ENCODE measurements at regions of chr1 and their contacts with region 1.

Region 1: DNA sequence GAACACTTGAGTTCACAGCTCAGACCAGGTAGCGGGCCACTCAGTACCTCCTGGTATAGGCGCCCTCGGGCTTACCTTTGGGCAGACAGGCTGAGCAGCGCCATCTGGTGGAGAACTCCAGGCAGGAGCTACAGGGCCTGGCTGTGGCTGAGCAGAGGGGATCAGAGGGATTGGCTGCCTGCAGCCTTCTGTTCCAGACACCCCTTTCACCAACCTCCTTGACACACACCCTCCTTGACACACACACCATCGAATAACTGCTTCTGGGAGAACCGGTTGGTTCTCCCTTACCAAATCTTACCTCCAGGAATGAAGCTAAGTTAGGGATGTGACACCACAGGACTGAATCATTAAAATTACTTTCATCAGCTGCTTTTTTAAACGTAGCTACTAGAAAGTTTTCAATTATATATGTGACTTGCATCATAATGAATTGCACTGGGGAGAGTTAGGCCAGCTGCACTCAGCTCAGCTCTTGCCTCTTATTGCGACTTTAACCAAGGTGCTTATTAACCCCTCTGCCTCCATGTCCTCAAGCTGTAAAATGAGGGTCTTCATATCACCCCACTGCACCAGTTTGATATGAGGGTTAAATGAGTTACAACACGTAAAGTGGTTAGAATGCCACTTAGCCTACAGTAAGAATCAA is 6.6 kb downstream of the LIN28A start:
- DNase-seq: peak; percentile 70 to 71
- ATAC-seq: peak; percentile 96 to 99
- H3K4me3 ChIP-seq: no peak overlapping the region
- H3K27ac ChIP-seq: no peak overlapping the region
- H3K4me1 ChIP-seq: peaks cover 5% of the 10 kb centered on the region; the same call in 1 of the 3 replicates
- CTCF ChIP-seq: peak; percentile 75
- EP300 ChIP-seq: no peak
- POLR2A ChIP-seq: no peak
- RAD21 ChIP-seq: peak; percentile 64 to 74

Region 2: DNA sequence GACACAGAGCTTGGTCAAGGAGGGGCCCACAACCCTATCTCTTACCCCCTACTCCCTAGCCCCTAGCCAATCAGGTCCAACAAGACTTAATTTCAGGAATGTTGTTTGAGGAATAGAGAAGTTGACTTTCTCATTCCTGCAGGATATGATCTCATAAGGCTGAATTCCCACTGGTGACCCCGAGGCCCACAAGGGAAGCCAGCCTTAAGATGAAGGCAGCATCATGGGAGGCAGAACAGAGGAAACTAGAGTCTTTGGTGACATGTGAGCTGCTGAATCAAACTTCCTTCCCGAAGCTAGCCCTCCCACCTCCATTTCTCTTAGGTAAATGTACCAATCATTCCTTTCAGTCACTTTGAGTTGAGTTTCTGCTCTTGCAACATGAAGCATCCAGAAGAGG is 314.7 kb before region 1 on chr1:
- CTCF ChIA-PET with region 1: interaction called, 11 read pairs
- POLR2A ChIA-PET with region 1: no interaction called
- DNase-seq: no peak
- ATAC-seq: no peak
- H3K4me3 ChIP-seq: no peak overlapping the region
- H3K27ac ChIP-seq: no peak overlapping the region
- H3K4me1 ChIP-seq: peaks cover 7% of the 10 kb centered on the region; the same call in 2 of the 3 replicates
- CTCF ChIP-seq: no peak
- EP300 ChIP-seq: no peak
- POLR2A ChIP-seq: no peak
- RAD21 ChIP-seq: no peak

Region 3: DNA sequence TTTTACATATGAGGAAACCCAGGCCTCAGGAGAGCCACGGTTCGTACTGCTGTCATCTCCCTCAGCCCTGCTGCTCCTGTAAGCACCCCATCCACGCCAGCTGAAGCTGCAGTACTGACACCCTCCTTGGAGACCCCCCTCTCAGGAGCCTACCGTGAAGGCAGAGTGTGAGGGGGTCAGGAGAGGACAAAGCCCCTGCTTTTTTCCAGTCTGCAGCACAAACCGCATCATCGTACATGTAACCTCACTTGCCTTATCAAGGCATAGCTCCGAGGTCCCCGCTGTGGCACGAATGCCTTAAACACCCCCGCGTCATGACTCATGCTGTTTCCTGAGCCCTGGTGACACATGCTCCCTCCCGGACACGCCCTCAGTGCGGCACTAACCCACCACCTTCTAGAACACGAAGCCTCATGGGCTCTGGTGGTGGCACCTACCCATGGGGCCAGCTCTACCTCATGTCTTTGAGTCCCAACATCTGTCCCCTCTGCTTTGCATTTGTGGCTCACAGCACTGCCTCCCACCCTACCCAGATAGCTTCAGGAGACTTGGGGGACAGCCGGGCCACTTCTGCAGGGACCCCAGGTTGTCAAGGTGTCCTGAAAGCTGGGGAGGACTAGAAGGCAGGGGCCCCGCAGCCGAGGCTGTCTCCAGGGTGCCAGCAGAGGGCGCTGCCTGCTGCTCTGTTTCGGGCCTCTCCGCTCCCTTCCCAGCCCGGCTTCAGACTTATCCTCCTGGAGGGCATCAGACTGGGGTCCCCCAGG is 132.5 kb before region 1 on chr1:
- CTCF ChIA-PET with region 1: interaction called, 46 read pairs
- POLR2A ChIA-PET with region 1: no interaction called
- DNase-seq: peak; percentile 64
- ATAC-seq: peak; percentile 67 to 82
- H3K4me3 ChIP-seq: no peak overlapping the region
- H3K27ac ChIP-seq: peak overlapping the region in 1 of 2 experiments; percentile 64; a peak in 3 of 6 replicates
- H3K4me1 ChIP-seq: peaks cover 23% of the 10 kb centered on the region
- CTCF ChIP-seq: peak; percentile 63
- EP300 ChIP-seq: no peak
- POLR2A ChIP-seq: no peak
- RAD21 ChIP-seq: peak; percentile 69

Region 4: DNA sequence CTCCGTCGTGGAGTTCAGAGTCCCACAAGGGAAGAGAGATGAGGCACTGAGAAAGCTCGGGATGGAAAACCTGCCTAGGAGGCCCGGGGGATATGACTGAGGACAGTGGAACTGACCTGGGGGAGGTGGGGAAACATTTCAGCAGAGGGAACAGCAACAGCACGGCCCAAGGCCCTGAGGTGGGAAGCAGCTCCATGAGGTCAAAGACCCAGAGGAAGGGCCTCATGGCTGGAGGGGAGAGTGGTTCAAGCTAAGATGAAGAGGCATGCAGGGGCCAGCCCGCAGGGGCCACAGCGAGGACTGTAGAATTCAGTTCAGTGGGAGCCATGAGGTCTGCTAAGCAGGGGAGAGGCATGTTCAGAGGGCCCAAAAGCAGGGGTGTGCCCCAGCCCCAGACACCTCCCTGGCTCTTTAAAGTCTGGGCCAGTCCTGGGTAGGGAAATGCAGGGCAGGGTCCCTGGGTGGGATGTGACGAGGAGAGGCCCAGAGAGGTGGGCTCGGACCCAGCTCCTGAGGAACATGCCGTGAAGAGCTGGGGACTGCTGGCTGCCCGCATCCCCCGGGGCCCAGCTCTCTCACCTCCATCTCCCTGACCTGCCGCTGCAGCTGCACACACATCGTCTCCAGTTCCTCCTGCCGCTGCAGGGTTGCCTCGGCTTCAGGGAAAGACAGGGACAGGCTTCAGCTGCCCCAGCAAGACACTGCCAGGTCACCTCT is 120.7 kb before region 1 on chr1:
- CTCF ChIA-PET with region 1: interaction called, 11 read pairs
- POLR2A ChIA-PET with region 1: no interaction called
- DNase-seq: no peak
- ATAC-seq: no peak
- H3K4me3 ChIP-seq: no peak overlapping the region
- H3K27ac ChIP-seq: no peak overlapping the region
- H3K4me1 ChIP-seq: 0 out of 3 replicates have a peak, but pooled peaks cover 3% of the 10 kb centered on the region
- CTCF ChIP-seq: no peak
- EP300 ChIP-seq: no peak
- POLR2A ChIP-seq: no peak
- RAD21 ChIP-seq: no peak

Region 5: GRCh38 chr1:26363549-26364448 is 53.4 kb before region 1 on chr1:
- CTCF ChIA-PET with region 1: interaction called, 30 read pairs
- POLR2A ChIA-PET with region 1: no interaction called
- DNase-seq: peak; percentile 57 to 59
- ATAC-seq: peak; percentile 73 to 90; a peak in 5 of 6 replicates
- H3K4me3 ChIP-seq: no peak overlapping the region
- H3K27ac ChIP-seq: peak overlapping the region in 1 of 2 experiments; percentile 47; a peak in 2 of 6 replicates
- H3K4me1 ChIP-seq: peaks cover 8% of the 10 kb centered on the region; the same call in 2 of the 3 replicates
- CTCF ChIP-seq: peak; percentile 81
- EP300 ChIP-seq: no peak
- POLR2A ChIP-seq: no peak
- RAD21 ChIP-seq: peak; percentile 71 to 76

Region 6: DNA sequence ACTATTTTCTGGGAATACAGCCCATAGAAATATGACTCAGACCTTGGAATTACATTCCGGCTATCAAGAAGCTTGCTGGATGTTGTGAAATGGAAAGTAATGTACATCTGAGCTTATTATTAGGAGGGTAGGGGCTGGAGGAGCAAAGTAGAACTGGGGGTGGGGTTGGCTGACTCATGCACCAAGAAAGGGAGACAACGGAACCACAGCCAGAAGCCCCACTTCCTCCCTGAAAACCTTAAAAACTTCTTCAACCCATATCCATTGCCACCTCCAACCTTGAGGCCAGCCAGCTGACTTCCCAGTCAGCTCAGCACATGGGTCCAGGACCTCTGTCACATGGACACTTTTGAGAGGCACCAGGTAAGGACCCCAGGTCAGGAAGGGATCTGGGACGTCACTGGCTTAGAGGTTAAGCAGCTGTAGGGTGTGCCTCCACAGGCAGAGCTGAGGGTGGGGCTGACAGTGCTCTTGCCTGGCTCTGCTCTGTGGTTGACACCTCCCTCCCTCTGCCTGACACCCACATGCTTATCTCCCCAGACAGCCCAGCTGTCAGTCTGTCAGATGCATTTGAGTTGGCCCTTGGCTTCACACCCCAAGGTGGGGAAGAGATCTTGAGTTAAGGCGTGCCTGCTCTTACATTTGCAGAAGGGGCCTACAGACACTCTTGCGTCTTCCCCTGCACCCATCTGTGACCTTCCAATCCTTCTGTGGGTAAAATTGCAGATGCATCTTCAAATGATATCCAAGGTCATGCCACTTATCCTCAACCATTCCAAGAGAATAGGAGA is 39.0 kb before region 1 on chr1:
- CTCF ChIA-PET with region 1: interaction called, 17 read pairs
- POLR2A ChIA-PET with region 1: no interaction called
- DNase-seq: peak; percentile 64 to 74
- ATAC-seq: peak; percentile 89 to 90
- H3K4me3 ChIP-seq: no peak overlapping the region
- H3K27ac ChIP-seq: peak overlapping the region; percentile 58 to 87
- H3K4me1 ChIP-seq: peaks cover 16% of the 10 kb centered on the region
- CTCF ChIP-seq: no peak
- EP300 ChIP-seq: peak; percentile 14 to 17; a peak in 2 of 5 replicates
- POLR2A ChIP-seq: no peak
- RAD21 ChIP-seq: no peak

Region 7: GRCh38 chr1:26431979-26432695 is 14.9 kb after region 1 on chr1 and contains the start of gene DHDDS:
- CTCF ChIA-PET with region 1: interaction called, 10 read pairs
- POLR2A ChIA-PET with region 1: interaction called, 7 read pairs
- DNase-seq: peak; percentile 86 to 97
- ATAC-seq: peak; percentile 96 to 98
- H3K4me3 ChIP-seq: peak within 1 kb of the TSS; percentile 69
- H3K27ac ChIP-seq: peak within 1 kb of the TSS; percentile 79 to 91
- H3K4me1 ChIP-seq: peaks cover 9% of the 10 kb centered on the region; the same call in 1 of the 3 replicates
- CTCF ChIP-seq: no peak
- EP300 ChIP-seq: no peak
- POLR2A ChIP-seq: peak; percentile 68
- RAD21 ChIP-seq: no peak
- polyA plus RNA-seq, gene DHDDS: 20.4 and 26.0 TPM in 2 replicates

Measured in A549 (cell line).